Mammary epithelial cell (primary cell): ENCODE measurements at regions of chr21 and their contacts with region 1.

Region 1: DNA sequence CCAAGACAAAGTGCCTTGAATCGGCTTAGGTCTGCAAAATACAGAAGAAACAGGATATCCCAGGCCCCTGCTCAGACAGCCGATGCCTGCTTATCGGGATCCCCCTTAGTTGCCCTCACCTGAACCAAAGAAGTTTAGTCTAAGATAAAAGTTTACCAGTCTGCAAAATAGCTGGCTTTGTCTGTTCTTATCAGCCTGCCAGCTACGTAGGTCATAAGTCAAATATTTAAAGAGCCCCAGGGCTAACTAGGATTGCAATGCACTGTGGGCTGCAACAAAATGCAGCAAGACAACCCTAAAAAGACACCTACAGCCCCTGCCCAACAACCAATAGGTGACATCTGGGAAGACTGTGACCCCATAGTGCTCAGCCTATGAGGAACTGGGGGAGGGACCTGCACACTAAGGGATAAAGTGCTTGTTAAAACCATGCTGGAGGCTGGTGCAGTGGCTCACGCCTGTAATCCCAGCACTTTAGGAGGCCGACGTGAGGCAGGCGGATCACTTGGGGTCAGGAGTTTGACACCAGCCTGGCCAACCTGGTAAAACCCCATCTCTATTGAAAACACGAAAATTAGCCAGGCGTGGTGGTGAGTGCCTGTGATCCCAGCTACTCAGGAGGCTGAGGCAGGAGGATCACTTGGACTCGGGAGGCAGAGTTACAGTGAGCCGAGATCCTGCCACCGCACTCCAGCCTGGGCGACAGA is 27.4 kb downstream of the LRRC3 start:
- DNase-seq: no peak
- H3K4me3 ChIP-seq: no peak overlapping the region
- H3K27ac ChIP-seq: no peak overlapping the region
- H3K4me1 ChIP-seq: no peaks in the 10 kb centered on the region
- H3K27me3 ChIP-seq: peaks cover under 1% of the 10 kb centered on the region
- CTCF ChIP-seq: no peak

Region 2: GRCh38 chr21:44299458-44300261 is 183.1 kb before region 1 on chr21 and contains the start of gene PFKL:
- CTCF ChIA-PET with region 1: no interaction called
- dilution Hi-C with region 1: no loop called
- in situ Hi-C with region 1: no loop called
- intact Hi-C with region 1: loop called (anchors 1 kb)
- DNase-seq: peak; percentile 66
- H3K4me3 ChIP-seq: peak within 1 kb of the TSS; percentile 54 to 86 (median 67)
- H3K27ac ChIP-seq: peak within 1 kb of the TSS; percentile 65
- H3K4me1 ChIP-seq: peaks cover 23% of the 10 kb centered on the region
- H3K27me3 ChIP-seq: no peaks in the 10 kb centered on the region
- CTCF ChIP-seq: no peak
- total RNA-seq, gene PFKL: 113 to 142 TPM

Region 3: GRCh38 chr21:44375281-44375651 is 107.5 kb before region 1 on chr21:
- CTCF ChIA-PET with region 1: no interaction called
- dilution Hi-C with region 1: no loop called
- in situ Hi-C with region 1: no loop called
- intact Hi-C with region 1: loop called (anchors 2 kb)
- DNase-seq: no peak
- H3K4me3 ChIP-seq: no peak overlapping the region
- H3K27ac ChIP-seq: no peak overlapping the region
- H3K4me1 ChIP-seq: peaks cover under 1% of the 10 kb centered on the region
- H3K27me3 ChIP-seq: no peaks in the 10 kb centered on the region
- CTCF ChIP-seq: no peak

Region 4: DNA sequence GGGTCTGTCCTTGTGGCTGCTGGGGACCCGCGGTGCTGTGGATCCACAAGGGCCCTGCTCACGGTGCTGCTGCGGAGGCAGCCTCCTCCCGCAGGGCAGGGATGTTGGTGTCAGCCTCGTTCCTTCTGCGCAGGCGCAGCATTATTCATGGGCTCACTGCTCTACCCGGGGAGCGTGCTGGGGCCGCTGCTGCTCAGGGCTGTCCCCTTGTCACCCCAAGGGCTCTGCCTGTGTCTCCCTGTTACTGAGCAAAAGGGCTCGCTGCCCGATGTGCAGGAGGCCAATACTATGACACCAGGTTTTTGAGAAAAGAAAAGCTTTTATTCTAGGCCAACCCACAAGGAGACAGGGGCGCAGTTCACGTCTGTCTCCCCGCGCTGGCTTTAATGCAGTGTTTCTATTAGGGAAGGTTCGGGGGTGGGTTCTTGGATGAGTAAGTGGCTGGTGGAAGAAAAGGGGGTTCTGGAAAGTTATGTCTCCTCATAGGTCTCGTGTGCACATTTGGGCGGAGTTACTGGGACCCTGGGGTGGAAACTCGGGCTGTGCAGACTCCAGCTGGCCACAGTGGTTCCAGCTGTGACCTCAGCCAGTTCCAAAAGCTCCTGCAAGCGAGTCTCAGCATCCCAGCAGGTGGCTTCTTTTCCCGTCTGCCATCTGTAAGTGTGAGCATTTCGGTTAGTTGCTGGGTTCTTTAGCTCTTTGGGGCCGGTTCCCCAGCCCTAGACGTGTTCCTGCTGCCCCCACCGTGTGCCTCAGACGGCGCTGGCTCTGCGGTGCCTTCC is 68.3 kb before region 1 on chr21:
- CTCF ChIA-PET with region 1: no interaction called
- dilution Hi-C with region 1: loop called (anchors 5 kb)
- in situ Hi-C with region 1: no loop called
- intact Hi-C with region 1: no loop called
- DNase-seq: no peak
- H3K4me3 ChIP-seq: no peak overlapping the region
- H3K27ac ChIP-seq: no peak overlapping the region
- H3K4me1 ChIP-seq: no peaks in the 10 kb centered on the region
- H3K27me3 ChIP-seq: no peaks in the 10 kb centered on the region
- CTCF ChIP-seq: no peak